K562 (cell line): ENCODE measurements at regions of chr1 and their contacts with region 1.

Region 1: GRCh38 chr1:167442124-167442848 is 76.0 kb downstream of the CD247 start:
- DNase-seq: peak; percentile 91 to 94 (median 92)
- ATAC-seq: peak; percentile 98
- H3K4me3 ChIP-seq: no peak overlapping the region
- H3K27ac ChIP-seq: no peak overlapping the region
- H3K4me1 ChIP-seq: peaks cover 2 to 13% of the 10 kb centered on the region in 2 experiments; a peak in 3 of 5 replicates
- H3K27me3 ChIP-seq: peaks cover 10 to 37% of the 10 kb centered on the region in 2 experiments
- CTCF ChIP-seq: peak; percentile 96 to 98 (median 97)
- EP300 ChIP-seq: no peak
- POLR2A ChIP-seq: no peak
- RAD21 ChIP-seq: peak; percentile 99 to 100

Region 2: GRCh38 chr1:166884040-166884642 is 558.1 kb before region 1 on chr1:
- CTCF ChIA-PET with region 1: no interaction called
- POLR2A ChIA-PET with region 1: no interaction called
- in situ Hi-C with region 1: loop called (anchors 10 kb)
- intact Hi-C with region 1: no loop called
- DNase-seq: peak; percentile 50 to 57 (median 54)
- ATAC-seq: peak; percentile 96
- H3K4me3 ChIP-seq: no peak overlapping the region
- H3K27ac ChIP-seq: no peak overlapping the region
- H3K4me1 ChIP-seq: peaks cover 0 to 8% of the 10 kb centered on the region in 2 experiments; a peak in 2 of 5 replicates
- H3K27me3 ChIP-seq: peaks cover 37 to 44% of the 10 kb centered on the region in 2 experiments
- CTCF ChIP-seq: peak; percentile 70 to 83 (median 73)
- EP300 ChIP-seq: no peak
- POLR2A ChIP-seq: no peak
- RAD21 ChIP-seq: peak; percentile 57 to 68

Region 3: GRCh38 chr1:167220537-167221125 is 221.7 kb before region 1 on chr1 and contains the start of gene POU2F1:
- CTCF ChIA-PET with region 1: no interaction called
- POLR2A ChIA-PET with region 1: no interaction called
- in situ Hi-C with region 1: no loop called
- intact Hi-C with region 1: loop called (anchors 5 kb)
- DNase-seq: peak; percentile 96 to 99 (median 97)
- ATAC-seq: peak; percentile 82
- H3K4me3 ChIP-seq: peak within 1 kb of the TSS; percentile 69
- H3K27ac ChIP-seq: peak within 1 kb of the TSS; percentile 95
- H3K4me1 ChIP-seq: peaks cover 17 to 26% of the 10 kb centered on the region in 2 experiments; a peak in 4 of 5 replicates
- H3K27me3 ChIP-seq: no peaks in the 10 kb centered on the region
- CTCF ChIP-seq: peak; percentile 62 to 93 (median 93)
- EP300 ChIP-seq: no peak
- POLR2A ChIP-seq: no peak; the same call in none of the 2 replicates
- RAD21 ChIP-seq: peak; percentile 48 to 59
- polyA plus RNA-seq, gene POU2F1: 2.6 to 6.0 TPM

Region 4: GRCh38 chr1:167297222-167298214 is 144.8 kb before region 1 on chr1:
- CTCF ChIA-PET with region 1: no interaction called
- POLR2A ChIA-PET with region 1: no interaction called
- in situ Hi-C with region 1: no loop called
- intact Hi-C with region 1: no loop called
- DNase-seq: no peak
- ATAC-seq: peak; percentile 73
- H3K4me3 ChIP-seq: no peak overlapping the region
- H3K27ac ChIP-seq: no peak overlapping the region
- H3K4me1 ChIP-seq: 0 out of 5 replicates have a peak, but pooled peaks cover 0 to 6% of the 10 kb centered on the region in 2 experiments
- H3K27me3 ChIP-seq: no peaks in the 10 kb centered on the region
- CTCF ChIP-seq: no peak
- EP300 ChIP-seq: no peak
- POLR2A ChIP-seq: no peak
- RAD21 ChIP-seq: no peak

Region 5: DNA sequence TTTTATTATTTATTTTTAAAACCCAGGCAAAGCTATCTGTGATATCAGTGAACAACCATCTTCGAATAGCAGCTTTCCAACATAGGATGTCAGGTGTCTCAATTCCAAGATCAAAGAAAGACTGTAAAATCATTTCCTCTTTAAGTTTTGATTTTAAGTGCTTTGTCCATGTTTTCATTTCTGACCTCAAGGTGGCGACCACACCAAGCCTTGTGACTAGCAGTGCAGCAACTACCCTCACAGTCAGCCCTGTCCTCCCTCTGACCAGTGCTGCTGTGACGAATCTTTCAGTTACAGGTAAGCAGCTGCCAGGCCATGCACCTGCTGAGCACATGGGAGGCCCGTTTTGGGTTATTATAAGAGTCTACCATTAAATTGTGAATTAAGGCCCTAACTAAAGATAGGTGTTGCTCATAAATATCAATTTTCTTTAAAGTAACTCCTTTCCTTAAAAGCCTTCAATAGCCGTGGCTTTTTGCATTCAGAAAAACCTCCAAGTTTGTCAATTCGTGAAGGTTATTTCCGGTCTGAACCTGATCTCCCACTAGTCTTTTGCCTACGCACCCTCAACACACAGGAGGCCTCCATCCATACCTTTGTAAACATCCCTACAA is 40.9 kb before region 1 on chr1:
- CTCF ChIA-PET with region 1: interaction called, 19 read pairs
- POLR2A ChIA-PET with region 1: no interaction called
- in situ Hi-C with region 1: no loop called
- intact Hi-C with region 1: loop called (anchors 1 kb)
- DNase-seq: peak; percentile 38 to 78 (median 58)
- ATAC-seq: peak; percentile 99
- H3K4me3 ChIP-seq: no peak overlapping the region
- H3K27ac ChIP-seq: no peak overlapping the region
- H3K4me1 ChIP-seq: no peaks in the 10 kb centered on the region
- H3K27me3 ChIP-seq: no peaks in the 10 kb centered on the region
- CTCF ChIP-seq: peak; percentile 75 to 91 (median 86)
- EP300 ChIP-seq: no peak
- POLR2A ChIP-seq: no peak
- RAD21 ChIP-seq: peak; percentile 89

Region 6: GRCh38 chr1:167533851-167534300 is 91.6 kb after region 1 on chr1:
- CTCF ChIA-PET with region 1: no interaction called
- POLR2A ChIA-PET with region 1: no interaction called
- in situ Hi-C with region 1: loop called (anchors 5 kb)
- intact Hi-C with region 1: loop called (anchors 1 kb)
- DNase-seq: peak; percentile 86 to 88 (median 87)
- ATAC-seq: peak; percentile 94
- H3K4me3 ChIP-seq: no peak overlapping the region
- H3K27ac ChIP-seq: no peak overlapping the region
- H3K4me1 ChIP-seq: no peaks in the 10 kb centered on the region; a peak in 2 of 5 replicates
- H3K27me3 ChIP-seq: peaks cover 0 to 8% of the 10 kb centered on the region in 2 experiments; a peak in 1 of 5 replicates
- CTCF ChIP-seq: peak; percentile 88 to 97 (median 96)
- EP300 ChIP-seq: no peak
- POLR2A ChIP-seq: no peak
- RAD21 ChIP-seq: peak; percentile 92 to 95

Region 7: DNA sequence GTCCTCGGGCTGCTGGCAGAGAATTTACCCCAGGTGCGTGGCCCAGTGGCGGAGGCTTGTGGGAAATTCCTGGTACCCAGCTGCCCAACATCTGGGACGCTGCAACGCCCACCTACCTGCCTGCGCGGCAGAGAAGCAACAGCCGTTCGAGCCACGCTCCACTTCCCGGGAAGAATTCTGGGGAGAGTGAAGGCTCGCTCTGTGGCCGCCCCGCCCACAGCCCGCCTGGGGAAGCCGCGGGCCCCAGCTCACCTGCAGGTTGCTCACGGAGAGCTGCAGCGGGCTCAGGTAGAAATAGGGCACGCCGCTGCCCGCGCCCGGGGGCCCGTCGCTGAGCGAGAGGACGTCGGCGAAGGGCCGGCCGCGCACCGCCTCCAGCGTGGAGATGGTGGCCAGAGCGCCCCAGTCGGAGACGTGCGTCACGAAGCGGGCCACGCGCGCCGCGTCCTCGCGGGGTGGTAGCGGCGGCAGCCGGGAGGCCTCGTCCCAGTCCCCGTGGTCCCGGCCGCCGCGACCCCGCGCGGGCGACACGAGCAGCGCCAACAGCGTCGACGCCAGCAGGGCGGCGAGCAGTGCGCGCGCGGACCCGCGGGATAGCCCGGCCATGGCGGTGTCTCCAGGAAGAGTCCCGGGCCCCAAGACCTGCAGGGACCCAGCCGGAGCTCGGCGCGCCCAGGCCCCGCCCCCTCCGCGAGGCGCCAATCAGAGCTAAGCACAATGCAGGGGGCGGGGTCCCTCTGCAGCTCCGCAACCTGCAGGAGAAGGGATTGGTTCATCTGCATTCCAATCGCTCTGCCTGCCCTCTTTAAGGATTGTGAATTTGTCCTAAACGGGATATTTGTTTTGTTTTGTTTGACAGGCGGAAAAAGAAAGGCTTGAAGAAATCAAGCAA is 111.1 kb after region 1 on chr1 and contains the start of gene CREG1:
- CTCF ChIA-PET with region 1: no interaction called
- POLR2A ChIA-PET with region 1: interaction called, 3 read pairs
- in situ Hi-C with region 1: no loop called
- intact Hi-C with region 1: loop called (anchors 1 kb)
- DNase-seq: peak; percentile 98 to 99 (median 98)
- ATAC-seq: peak; percentile 93
- H3K4me3 ChIP-seq: peak within 1 kb of the TSS; percentile 73
- H3K27ac ChIP-seq: peak within 1 kb of the TSS; percentile 70
- H3K4me1 ChIP-seq: peaks cover 23 to 45% of the 10 kb centered on the region in 2 experiments
- H3K27me3 ChIP-seq: no peaks in the 10 kb centered on the region
- CTCF ChIP-seq: peak in 2 of 3 experiments; percentile 24 to 41; a peak in 2 of 6 replicates
- EP300 ChIP-seq: 0 out of 2 replicates have a peak, but pooled peaks have one; percentile 9
- POLR2A ChIP-seq: peak; percentile 82
- RAD21 ChIP-seq: peak in 1 of 2 experiments; percentile 12; a peak in 1 of 4 replicates
- polyA plus RNA-seq, gene CREG1: 45.7 to 58.2 TPM

Region 8: GRCh38 chr1:167697667-167698141 is 255.4 kb after region 1 on chr1:
- CTCF ChIA-PET with region 1: no interaction called
- POLR2A ChIA-PET with region 1: no interaction called
- in situ Hi-C with region 1: no loop called
- intact Hi-C with region 1: no loop called
- DNase-seq: no peak
- ATAC-seq: no peak
- H3K4me3 ChIP-seq: no peak overlapping the region
- H3K27ac ChIP-seq: no peak overlapping the region
- H3K4me1 ChIP-seq: no peaks in the 10 kb centered on the region; a peak in 1 of 5 replicates
- H3K27me3 ChIP-seq: no peaks in the 10 kb centered on the region
- CTCF ChIP-seq: no peak
- EP300 ChIP-seq: no peak
- POLR2A ChIP-seq: no peak
- RAD21 ChIP-seq: no peak